Testis (tissue), 5 donors: ENCODE measurements at regions of chr17 and their contacts with region 1.

Region 1: GRCh38 chr17:48878918-48879898 is 13.4 kb upstream of the ATP5MC1 start:
- DNase-seq: peak; percentile 61
- H3K4me3 ChIP-seq: no peak overlapping the region
- H3K27ac ChIP-seq: no peak overlapping the region
- H3K4me1 ChIP-seq: no peaks in the 10 kb centered on the region
- H3K27me3 ChIP-seq: no peaks in the 10 kb centered on the region
- CTCF ChIP-seq: peak; percentile 67 to 86 (median 79)
- POLR2A ChIP-seq: no peak

Region 2: DNA sequence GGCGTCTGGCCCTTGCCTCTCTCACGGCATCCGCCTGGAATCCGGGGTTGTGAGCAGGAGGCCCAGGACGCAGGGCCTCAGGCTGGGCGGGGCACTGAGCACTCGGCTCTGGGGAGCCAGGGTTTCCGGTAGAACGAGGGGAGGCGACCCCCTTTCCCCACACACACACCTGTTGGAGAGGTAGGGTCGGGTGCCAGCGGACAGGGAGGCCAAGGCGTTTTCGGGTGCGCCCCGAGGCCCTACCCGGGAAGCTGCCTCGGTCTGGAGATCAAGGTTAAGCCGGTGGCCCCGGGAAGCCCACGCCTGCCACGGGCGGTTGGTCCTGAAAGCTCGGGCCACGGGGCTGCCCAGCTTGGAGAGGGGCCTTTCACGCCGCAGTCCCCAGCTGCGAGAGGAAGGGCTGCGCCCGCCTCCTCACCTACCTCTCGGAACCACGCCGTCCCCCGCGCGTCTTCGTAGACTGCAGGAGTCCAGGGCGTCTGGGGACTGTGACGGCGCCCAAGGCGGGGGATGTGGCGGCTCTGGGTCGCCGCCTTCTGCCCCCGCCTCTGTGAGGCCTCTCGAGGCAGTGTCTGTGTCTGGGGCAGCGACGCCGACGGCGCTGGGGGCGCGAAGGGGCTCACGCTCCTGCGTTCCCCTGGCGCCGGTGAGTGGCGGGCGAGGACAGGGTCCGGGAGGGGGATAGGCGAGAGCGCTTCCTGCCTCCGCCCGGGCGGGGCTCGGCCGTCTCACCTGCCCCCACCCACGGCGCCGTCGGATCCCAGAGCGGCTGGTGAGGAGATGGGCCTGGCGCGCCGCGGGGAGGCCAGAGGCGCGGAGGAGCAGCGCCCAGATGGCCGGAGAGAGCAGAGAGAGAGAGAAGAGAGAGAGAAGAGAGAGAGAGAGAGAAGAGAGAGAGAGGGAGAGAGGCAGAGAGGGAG is 232.8 kb before region 1 on chr17:
- intact Hi-C with region 1: no loop called
- DNase-seq: no peak
- H3K4me3 ChIP-seq: peak overlapping the region; percentile 41 to 46
- H3K27ac ChIP-seq: no peak overlapping the region
- H3K4me1 ChIP-seq: peaks cover 7% of the 10 kb centered on the region
- H3K27me3 ChIP-seq: no peaks in the 10 kb centered on the region
- CTCF ChIP-seq: no peak
- POLR2A ChIP-seq: no peak

Region 3: GRCh38 chr17:48711102-48711501 is 168.1 kb before region 1 on chr17:
- intact Hi-C with region 1: no loop called
- DNase-seq: no peak
- H3K4me3 ChIP-seq: no peak overlapping the region
- H3K27ac ChIP-seq: no peak overlapping the region
- H3K4me1 ChIP-seq: no peaks in the 10 kb centered on the region
- H3K27me3 ChIP-seq: no peaks in the 10 kb centered on the region
- CTCF ChIP-seq: no peak
- POLR2A ChIP-seq: no peak

Region 4: GRCh38 chr17:48724251-48725003 is 154.8 kb before region 1 on chr17:
- intact Hi-C with region 1: loop called (anchors 5 kb)
- DNase-seq: peak; percentile 95
- H3K4me3 ChIP-seq: no peak overlapping the region
- H3K27ac ChIP-seq: no peak overlapping the region
- H3K4me1 ChIP-seq: peaks cover 23% of the 10 kb centered on the region
- H3K27me3 ChIP-seq: no peaks in the 10 kb centered on the region
- CTCF ChIP-seq: peak; percentile 60 to 71 (median 68)
- POLR2A ChIP-seq: no peak

Region 5: DNA sequence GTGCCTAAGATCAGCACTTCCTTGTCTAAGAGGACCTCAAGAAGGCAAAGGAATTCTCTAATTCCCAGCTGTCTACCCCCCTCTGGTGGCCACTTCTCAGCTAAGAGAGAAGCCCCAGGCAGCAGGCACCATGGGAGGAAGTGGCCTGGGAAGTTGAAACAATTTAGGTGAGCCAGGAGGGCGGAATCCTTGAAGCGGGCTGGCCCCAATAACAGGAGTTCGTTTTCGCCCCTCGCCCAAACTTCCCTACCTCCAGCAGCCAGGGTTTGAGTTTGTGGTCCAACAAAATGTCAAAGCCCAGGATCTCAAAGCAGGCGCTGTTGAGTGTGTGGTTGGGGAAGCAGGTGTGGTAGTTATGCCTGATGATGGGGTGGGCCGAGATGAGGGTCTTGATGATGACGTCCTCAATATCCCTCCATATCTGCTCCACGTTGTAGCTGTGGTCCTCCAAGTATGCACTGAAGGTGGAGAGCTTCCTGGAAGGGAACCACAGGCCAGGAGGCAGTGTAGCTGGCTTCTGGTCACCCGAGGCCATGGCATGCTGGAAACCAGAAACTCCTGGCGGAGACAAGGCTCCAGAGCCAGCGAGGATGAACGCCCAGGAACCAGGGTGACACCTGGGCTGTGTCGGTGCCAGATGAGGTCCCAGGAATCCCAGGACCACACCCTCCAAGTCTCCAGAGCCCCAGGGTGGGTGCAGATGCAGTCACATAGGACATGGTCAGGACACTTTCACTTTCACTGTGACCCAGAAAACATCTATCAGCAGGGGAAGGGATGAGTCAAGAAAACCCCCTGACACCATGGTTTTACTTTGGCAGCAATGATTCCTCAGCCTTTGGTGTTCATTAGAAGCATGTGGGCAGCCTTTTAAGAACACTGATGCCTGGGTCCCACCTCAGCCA is 87.8 kb before region 1 on chr17:
- intact Hi-C with region 1: loop called (anchors 5 kb)
- DNase-seq: peak; percentile 91
- H3K4me3 ChIP-seq: no peak overlapping the region
- H3K27ac ChIP-seq: no peak overlapping the region
- H3K4me1 ChIP-seq: no peaks in the 10 kb centered on the region
- H3K27me3 ChIP-seq: no peaks in the 10 kb centered on the region
- CTCF ChIP-seq: peak; percentile 66 to 74 (median 68)
- POLR2A ChIP-seq: no peak

Region 6: GRCh38 chr17:48825446-48826381 is 53.5 kb before region 1 on chr17:
- intact Hi-C with region 1: loop called (anchors 10 kb)
- DNase-seq: no peak
- H3K4me3 ChIP-seq: no peak overlapping the region
- H3K27ac ChIP-seq: no peak overlapping the region
- H3K4me1 ChIP-seq: no peaks in the 10 kb centered on the region
- H3K27me3 ChIP-seq: no peaks in the 10 kb centered on the region
- CTCF ChIP-seq: no peak
- POLR2A ChIP-seq: no peak

Region 7: DNA sequence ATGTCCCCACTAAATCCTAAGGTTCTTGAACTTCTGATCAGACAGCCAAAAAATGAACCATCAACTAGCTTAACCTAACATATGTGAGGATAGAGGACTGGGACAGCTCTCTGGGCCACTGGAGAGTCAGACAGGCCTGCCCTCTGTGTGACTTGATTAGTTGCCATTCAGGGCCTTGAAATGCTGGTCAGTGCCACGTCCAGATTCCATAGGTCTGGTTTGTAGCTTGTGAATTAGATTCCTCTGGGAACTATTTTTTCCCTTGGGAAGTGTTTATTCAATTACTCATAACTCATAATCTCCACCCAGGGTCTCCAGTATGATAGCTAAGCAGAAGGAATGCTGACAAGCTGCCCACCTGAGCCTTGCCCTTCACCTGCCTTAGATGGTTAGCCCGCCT is 166.2 kb after region 1 on chr17:
- intact Hi-C with region 1: no loop called
- DNase-seq: no peak
- H3K4me3 ChIP-seq: no peak overlapping the region
- H3K27ac ChIP-seq: no peak overlapping the region
- H3K4me1 ChIP-seq: no peaks in the 10 kb centered on the region
- H3K27me3 ChIP-seq: no peaks in the 10 kb centered on the region
- CTCF ChIP-seq: no peak
- POLR2A ChIP-seq: no peak